ENCODE measurements at regions of chr11 and their contacts with region 1.

Region 1: DNA sequence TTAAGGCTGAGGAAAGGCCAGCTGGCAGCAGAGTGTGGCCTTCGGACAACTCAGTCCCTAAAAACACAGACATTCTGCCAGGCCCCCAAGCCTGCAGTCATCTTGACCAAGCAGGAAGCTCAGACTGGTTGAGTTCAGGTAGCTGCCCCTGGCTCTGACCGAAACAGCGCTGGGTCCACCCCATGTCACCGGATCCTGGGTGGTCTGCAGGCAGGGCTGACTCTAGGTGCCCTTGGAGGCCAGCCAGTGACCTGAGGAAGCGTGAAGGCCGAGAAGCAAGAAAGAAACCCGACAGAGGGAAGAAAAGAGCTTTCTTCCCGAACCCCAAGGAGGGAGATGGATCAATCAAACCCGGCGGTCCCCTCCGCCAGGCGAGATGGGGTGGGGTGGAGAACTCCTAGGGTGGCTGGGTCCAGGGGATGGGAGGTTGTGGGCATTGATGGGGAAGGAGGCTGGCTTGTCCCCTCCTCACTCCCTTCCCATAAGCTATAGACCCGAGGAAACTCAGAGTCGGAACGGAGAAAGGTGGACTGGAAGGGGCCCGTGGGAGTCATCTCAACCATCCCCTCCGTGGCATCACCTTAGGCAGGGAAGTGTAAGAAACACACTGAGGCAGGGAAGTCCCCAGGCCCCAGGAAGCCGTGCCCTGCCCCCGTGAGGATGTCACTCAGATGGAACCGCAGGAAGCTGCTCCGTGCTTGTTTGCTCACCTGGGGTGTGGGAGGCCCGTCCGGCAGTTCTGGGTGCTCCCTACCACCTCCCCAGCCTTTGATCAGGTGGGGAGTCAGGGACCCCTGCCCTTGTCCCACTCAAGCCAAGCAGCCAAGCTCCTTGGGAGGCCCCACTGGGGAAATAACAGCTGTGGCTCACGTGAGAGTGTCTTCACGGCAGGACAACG is 11.7 kb downstream of the CXCR5 start:
- DNase-seq: peak; percentile 75
- ATAC-seq: peak; percentile 68
- H3K4me3 Mint-ChIP-seq: peak overlapping the region; percentile 53
- H3K27ac Mint-ChIP-seq: peak overlapping the region; percentile 83
- H3K4me1 Mint-ChIP-seq: peaks cover 65% of the 10 kb centered on the region
- H3K27me3 Mint-ChIP-seq: no peaks in the 10 kb centered on the region

Region 2: DNA sequence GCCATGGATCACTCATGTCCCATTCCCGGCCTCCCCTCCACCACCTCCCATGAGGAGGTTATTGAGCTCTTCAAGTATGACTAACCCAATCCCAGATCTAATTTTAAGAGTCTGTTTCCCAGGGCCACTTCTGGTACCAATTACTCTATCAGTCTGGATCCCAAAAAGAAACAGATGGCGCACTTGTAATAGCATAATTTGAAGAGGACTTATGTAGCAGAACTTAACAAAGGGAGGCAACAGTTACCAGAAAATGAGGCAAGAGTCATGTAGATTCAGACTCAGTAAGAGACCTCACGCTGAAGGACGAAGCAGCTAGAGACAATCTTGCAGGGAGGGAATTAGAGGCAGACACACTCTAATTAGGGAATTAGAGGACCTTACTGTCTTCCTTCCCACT is 151.3 kb before region 1 on chr11:
- CTCF ChIA-PET with region 1: no interaction called
- POLR2A ChIA-PET with region 1: no interaction called
- DNase-seq: no peak
- ATAC-seq: no peak
- H3K4me3 Mint-ChIP-seq: no peak overlapping the region
- H3K27ac Mint-ChIP-seq: no peak overlapping the region
- H3K4me1 Mint-ChIP-seq: no peaks in the 10 kb centered on the region
- H3K27me3 Mint-ChIP-seq: peaks cover 5% of the 10 kb centered on the region

Region 3: DNA sequence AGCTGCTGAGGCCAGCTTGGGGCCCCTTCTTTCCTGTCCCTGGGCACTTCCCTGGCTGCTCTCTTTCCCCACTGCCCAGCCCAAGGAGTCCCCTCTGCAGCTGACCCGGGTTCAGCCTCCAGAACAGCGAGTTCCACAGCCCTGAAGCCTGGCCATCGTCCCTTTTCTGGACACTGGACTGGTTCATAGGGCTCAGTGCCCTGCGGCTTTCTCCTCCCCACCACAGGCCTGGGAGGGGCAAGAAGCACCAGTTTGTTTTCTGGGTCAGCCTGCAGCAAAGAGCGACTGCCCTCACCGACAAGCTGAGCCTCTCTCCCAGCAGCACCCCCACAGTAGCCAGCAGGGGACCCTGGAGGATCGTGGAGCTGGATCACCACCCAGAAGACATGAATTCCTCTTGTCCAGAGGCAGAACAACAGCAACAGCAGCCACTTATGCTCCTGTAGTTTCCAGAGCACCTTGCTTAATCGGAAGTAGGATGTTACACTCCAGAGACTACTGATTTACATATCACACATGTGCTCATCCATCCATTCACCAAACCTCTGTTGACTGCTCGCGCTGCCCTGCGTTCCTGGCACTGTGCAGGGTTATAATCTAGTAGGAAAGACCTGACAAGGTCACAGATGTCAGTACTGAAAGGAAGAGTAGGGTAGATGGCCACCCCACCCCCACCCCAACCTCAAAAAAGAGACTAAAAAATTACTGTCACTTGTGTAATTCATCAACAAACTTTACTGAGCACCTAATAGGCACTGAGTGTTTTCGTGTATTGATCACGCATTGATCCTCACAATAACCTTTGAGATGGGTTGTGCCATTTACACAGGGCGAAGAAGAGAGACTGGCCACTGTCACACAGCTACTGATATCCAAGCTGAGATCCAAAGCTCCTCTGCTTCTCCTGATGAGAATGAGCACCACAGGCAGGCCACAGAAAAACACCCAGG is 24.7 kb before region 1 on chr11:
- CTCF ChIA-PET with region 1: interaction called, 33 read pairs
- POLR2A ChIA-PET with region 1: interaction called, 35 read pairs
- DNase-seq: no peak
- ATAC-seq: peak; percentile 49
- H3K4me3 Mint-ChIP-seq: peak overlapping the region; percentile 75
- H3K27ac Mint-ChIP-seq: peak overlapping the region; percentile 98
- H3K4me1 Mint-ChIP-seq: peaks cover 54% of the 10 kb centered on the region
- H3K27me3 Mint-ChIP-seq: no peaks in the 10 kb centered on the region

Region 4: GRCh38 chr11:118878163-118878563 is 17.2 kb before region 1 on chr11:
- CTCF ChIA-PET with region 1: interaction called, 5 read pairs
- POLR2A ChIA-PET with region 1: interaction called, 15 read pairs
- DNase-seq: peak; percentile 39
- ATAC-seq: peak; percentile 20
- H3K4me3 Mint-ChIP-seq: no peak overlapping the region
- H3K27ac Mint-ChIP-seq: peak overlapping the region; percentile 78
- H3K4me1 Mint-ChIP-seq: peaks cover 86% of the 10 kb centered on the region
- H3K27me3 Mint-ChIP-seq: no peaks in the 10 kb centered on the region

Region 5: GRCh38 chr11:118907051-118908042 is 12.0 kb after region 1 on chr11:
- CTCF ChIA-PET with region 1: interaction called, 8 read pairs
- POLR2A ChIA-PET with region 1: interaction called, 13 read pairs
- DNase-seq: peak; percentile 91
- ATAC-seq: peak; percentile 74
- H3K4me3 Mint-ChIP-seq: no peak overlapping the region
- H3K27ac Mint-ChIP-seq: peak overlapping the region; percentile 42
- H3K4me1 Mint-ChIP-seq: peaks cover 47% of the 10 kb centered on the region
- H3K27me3 Mint-ChIP-seq: no peaks in the 10 kb centered on the region

Measured in activated CD8-positive, alpha-beta T cell treated with anti-CD3 and anti-CD28 coated beads, Interleukin-2, amount 10 ng/mL, durations not matched to agents 7 days and 5 days (primary cell).